ENCODE measurements at regions of chr17 and their contacts with region 1.

Region 1: GRCh38 chr17:4948166-4948930 is at the start of gene PFN1:
- DNase-seq: no peak
- ATAC-seq: peak; percentile 40
- H3K4me3 ChIP-seq: peak within 1 kb of the TSS; percentile 83 to 85
- H3K27ac ChIP-seq: peak within 1 kb of the TSS; percentile 94
- H3K4me1 ChIP-seq: peaks cover 35% of the 10 kb centered on the region
- H3K27me3 ChIP-seq: no peaks in the 10 kb centered on the region
- CTCF ChIP-seq: no peak
- total RNA-seq, gene PFN1: 1,074 TPM

Region 2: DNA sequence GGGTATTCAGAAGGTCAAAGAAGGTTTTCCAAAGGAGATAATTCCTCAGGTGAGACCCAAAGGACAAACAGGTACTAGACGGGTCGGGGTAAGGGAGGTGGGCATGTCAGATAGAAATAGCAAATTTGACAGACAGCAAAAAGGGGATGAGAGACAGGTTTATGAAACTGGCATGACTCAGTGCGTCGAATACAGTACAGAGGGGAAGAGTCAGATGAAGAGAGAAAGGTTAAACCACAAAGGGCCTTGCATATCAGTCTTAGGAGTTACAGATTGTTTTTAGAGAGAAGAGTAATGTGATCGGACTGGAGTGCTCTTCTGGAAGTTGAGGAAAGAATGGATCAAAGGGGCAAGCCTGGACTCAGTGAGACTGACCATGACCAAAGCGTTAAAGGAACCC is 893.9 kb before region 1 on chr17:
- CTCF ChIA-PET with region 1: no interaction called
- POLR2A ChIA-PET with region 1: interaction called, 11 read pairs
- in situ Hi-C with region 1: no loop called
- intact Hi-C with region 1: no loop called
- DNase-seq: no peak
- ATAC-seq: no peak
- H3K4me3 ChIP-seq: no peak overlapping the region
- H3K27ac ChIP-seq: no peak overlapping the region
- H3K4me1 ChIP-seq: no peaks in the 10 kb centered on the region
- H3K27me3 ChIP-seq: no peaks in the 10 kb centered on the region
- CTCF ChIP-seq: no peak

Region 3: GRCh38 chr17:5049314-5049895 is 101.1 kb after region 1 on chr17:
- CTCF ChIA-PET with region 1: no interaction called
- POLR2A ChIA-PET with region 1: no interaction called
- in situ Hi-C with region 1: no loop called
- intact Hi-C with region 1: no loop called
- DNase-seq: no peak
- ATAC-seq: no peak
- H3K4me3 ChIP-seq: no peak overlapping the region
- H3K27ac ChIP-seq: no peak overlapping the region
- H3K4me1 ChIP-seq: no peaks in the 10 kb centered on the region
- H3K27me3 ChIP-seq: no peaks in the 10 kb centered on the region
- CTCF ChIP-seq: no peak